BJ (cell line): ENCODE measurements at regions of chr3 and their contacts with region 1.

Region 1: DNA sequence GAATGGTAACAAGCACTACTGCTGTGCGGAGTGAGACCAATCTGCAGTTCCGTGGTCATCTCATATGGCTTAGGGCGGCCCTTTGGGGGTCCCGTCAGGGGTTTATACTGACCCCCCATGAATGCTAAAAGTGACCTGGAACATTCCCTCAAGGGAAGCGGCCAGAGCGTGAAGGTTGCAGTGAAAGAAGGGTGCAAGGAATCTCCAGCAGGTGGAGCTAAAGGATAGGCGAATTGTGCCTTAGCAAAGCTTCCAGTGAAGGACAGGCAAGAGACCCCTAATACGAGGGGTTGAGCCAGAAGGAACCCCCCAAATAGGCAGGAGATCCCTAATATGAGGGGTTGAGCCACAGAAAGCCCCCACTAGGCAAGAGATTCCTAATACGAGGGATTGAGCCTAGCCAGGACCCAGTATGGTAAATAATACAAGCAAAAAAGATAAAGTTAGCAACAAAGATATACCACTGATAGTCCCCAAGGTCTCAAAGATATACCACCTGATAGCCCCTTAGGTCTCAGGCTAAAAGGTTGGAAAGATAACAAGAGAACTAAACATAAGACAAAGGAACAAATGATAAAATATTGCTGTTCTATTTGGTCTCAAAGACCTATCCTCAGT is 32.8 kb downstream of the ZNF589 start:
- DNase-seq: no peak
- H3K4me3 ChIP-seq: no peak overlapping the region
- H3K27me3 ChIP-seq: no peaks in the 10 kb centered on the region
- CTCF ChIP-seq: peak; percentile 82

Region 2: DNA sequence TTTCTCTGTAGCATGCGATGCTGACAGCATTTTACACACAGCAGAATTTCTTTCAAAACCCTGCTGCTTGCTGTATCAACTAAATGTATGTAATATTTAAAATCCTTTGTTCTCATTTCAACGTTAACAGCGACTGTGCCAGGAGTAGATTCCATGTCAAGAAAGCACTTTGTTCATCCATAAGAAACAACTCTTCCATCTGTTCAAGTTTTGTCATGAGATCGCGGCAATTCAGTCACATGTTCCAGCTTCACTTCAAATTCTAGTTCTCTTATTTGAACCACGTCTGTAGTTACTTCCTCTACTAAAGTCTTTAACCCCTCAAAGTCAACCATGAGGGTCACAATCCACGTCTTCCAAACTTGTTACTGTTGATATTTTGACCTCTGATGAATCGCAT is 542.6 kb before region 1 on chr3:
- CTCF ChIA-PET with region 1: no interaction called
- POLR2A ChIA-PET with region 1: no interaction called
- DNase-seq: no peak
- H3K4me3 ChIP-seq: no peak overlapping the region
- H3K27me3 ChIP-seq: no peaks in the 10 kb centered on the region
- CTCF ChIP-seq: no peak

Region 3: DNA sequence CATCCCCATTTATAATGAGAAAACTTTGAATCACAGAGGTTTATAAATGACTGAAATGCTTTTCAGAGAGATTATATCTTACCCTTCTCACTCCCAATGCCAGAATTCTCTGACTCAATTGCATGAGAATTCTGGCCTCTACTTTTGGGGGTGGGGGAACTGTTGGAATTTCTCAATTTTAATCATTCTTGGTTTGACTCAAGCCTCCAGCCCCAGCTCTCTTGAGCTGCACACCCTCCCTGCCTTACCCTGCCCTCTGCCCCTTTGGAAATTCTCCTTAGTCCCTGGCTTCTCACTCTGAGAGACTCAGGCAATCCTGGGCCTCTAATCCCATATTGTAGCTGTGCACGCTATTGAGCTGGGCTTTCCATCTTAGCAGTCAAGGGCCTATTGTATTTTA is 11.4 kb after region 1 on chr3:
- CTCF ChIA-PET with region 1: interaction called, 15 read pairs
- POLR2A ChIA-PET with region 1: no interaction called
- DNase-seq: peak; percentile 49
- H3K4me3 ChIP-seq: no peak overlapping the region
- H3K27me3 ChIP-seq: no peaks in the 10 kb centered on the region
- CTCF ChIP-seq: no peak